ENCODE measurements at regions of chr12 and their contacts with region 1.

Region 1: DNA sequence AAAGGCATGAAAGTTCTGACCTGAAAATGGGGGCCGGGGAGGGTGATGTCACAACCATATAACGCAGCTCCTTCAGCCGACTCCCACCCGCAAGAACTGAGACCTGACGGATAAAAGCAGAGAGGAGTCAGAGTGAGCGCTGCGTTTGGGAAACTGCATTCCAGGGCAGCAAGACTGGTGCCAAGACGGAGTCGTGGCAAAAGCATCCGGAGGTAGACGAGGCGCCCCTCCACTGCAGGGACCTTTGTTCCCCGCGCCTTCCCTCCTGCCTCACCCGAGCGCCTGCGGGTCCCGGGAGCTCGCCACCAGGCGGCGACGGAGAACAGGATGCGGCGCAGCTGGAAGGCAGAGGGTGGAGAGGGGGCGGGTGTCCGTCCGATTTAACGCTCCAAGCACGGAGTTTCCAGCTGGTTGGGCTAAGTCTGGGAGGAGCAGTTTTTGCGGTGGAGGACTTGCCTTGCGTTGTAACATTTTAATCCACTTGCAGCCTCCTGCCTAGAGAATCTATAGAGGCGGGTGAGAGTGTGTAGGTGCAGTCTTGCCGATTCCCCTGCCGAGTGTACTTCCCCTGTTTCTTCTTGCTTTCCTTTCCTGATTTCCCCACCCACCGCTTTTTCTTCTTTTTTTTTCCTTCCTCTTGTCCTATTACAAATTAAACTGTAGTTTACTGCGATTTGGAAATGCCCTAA is 1.2 kb upstream of the CPNE8 start:
- DNase-seq: peak; percentile 25 to 83 (median 49)
- ATAC-seq: peak; percentile 77
- H3K4me3 ChIP-seq: peak overlapping the region; percentile 76
- H3K4me3 Mint-ChIP-seq: peak overlapping the region; percentile 86 to 97 (median 92)
- H3K27ac ChIP-seq: no peak overlapping the region
- H3K27ac Mint-ChIP-seq: peak overlapping the region in 6 of 9 donors; percentile 38 to 95 (median 56)
- H3K4me1 ChIP-seq: no peaks in the 10 kb centered on the region
- H3K4me1 Mint-ChIP-seq: peaks cover 17 to 36% (median 25%) of the 10 kb centered on the region in 7 donors
- H3K27me3 ChIP-seq: no peaks in the 10 kb centered on the region
- H3K27me3 Mint-ChIP-seq: peaks cover 6 to 27% (median 21%) of the 10 kb centered on the region in 5 donors

Region 2: DNA sequence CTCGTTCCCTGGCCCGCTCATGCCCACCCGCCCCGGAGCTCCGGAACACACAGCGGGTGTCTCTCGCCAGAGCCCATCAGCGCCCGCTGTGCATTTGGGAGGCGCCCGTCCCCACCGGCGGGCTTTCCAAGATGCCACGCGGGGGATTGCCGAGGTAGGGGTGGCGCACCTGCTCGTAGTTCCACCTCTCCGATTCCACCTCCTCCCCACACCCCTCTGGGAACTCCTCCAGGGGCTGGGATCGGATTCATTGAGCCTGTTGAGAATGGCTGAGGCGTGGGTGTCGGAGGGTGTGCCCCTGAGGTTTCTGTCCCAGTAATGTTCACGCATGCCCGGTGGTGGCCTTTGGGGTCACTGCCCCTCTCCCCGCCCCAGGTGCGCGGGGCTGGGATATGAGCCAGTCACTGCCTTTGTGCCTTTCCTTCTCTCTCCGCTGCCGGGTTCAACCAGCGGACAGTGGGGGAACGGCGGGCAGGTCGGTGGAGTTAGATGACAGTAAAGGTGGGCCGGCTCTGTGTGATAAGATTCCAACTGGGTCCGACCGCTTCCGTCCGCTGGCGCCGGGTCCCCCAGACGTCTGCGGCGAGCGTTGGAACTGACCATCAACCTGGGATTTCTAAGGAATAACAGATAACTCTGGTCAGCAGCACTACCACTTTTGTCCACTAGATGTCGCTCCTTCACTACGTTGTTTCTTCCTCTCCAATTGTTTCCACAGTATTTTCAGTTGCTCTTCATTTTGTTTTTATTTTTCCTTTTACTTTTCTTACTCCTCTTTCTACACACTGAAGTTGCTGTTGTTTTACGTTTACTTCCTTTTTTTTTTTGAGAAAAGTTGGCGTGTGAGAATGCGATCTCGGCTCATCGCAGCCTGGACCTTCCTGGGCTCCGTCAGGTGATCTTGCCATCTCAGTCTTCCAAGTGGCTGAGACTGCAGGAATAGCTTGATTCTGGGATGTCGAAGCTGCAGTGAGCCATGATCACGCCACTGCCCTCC is 768.1 kb before region 1 on chr12:
- CTCF ChIA-PET with region 1: no interaction called
- POLR2A ChIA-PET with region 1: no interaction called
- intact Hi-C with region 1: loop called (anchors 10 kb)
- DNase-seq: peak in 8 of 9 donors; percentile 26 to 65 (median 54)
- ATAC-seq: peak; percentile 74
- H3K4me3 ChIP-seq: peak overlapping the region; percentile 31
- H3K4me3 Mint-ChIP-seq: peak overlapping the region; percentile 45 to 89 (median 80)
- H3K27ac ChIP-seq: no peak overlapping the region
- H3K27ac Mint-ChIP-seq: peak overlapping the region in 4 of 9 donors; percentile 33 to 71 (median 53)
- H3K4me1 ChIP-seq: peaks cover 0 to 3% of the 10 kb centered on the region in 2 donors
- H3K4me1 Mint-ChIP-seq: peaks cover 0 to 13% (median 9%) of the 10 kb centered on the region in 7 donors
- H3K27me3 ChIP-seq: no peaks in the 10 kb centered on the region
- H3K27me3 Mint-ChIP-seq: peaks cover 0 to 29% (median 18%) of the 10 kb centered on the region in 5 donors

Region 3: DNA sequence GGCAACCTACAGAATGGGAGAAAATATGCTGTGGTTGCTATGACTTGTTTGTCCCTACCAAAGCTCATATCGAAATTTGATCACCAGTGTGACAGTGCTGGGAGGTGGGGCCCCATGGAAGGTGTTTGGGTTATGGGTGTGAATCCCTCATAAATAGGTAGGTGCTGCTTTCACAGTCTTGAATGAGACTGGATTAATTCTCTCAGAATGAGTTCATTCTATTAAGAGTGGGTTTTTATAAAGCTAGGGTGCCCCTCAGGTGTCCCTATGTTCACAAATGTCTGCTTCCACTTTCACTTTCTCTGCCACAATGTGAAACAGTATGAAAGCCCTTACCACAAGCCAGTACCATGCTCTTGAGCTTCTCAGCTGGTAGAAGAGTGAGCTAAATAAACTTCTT is 134.8 kb before region 1 on chr12:
- CTCF ChIA-PET with region 1: no interaction called
- POLR2A ChIA-PET with region 1: no interaction called
- intact Hi-C with region 1: loop called in 1 of 2 experiments (anchors 5 kb)
- DNase-seq: peak in 5 of 9 donors; percentile 10 to 30 (median 15)
- ATAC-seq: peak; percentile 67
- H3K4me3 ChIP-seq: peak overlapping the region; percentile 37
- H3K4me3 Mint-ChIP-seq: peak overlapping the region in 9 of 10 donors; percentile 29 to 74 (median 67)
- H3K27ac ChIP-seq: peak overlapping the region; percentile 40
- H3K27ac Mint-ChIP-seq: peak overlapping the region; percentile 11 to 85 (median 41)
- H3K4me1 ChIP-seq: no peaks in the 10 kb centered on the region
- H3K4me1 Mint-ChIP-seq: peaks cover 0 to 13% (median 11%) of the 10 kb centered on the region in 7 donors
- H3K27me3 ChIP-seq: no peaks in the 10 kb centered on the region
- H3K27me3 Mint-ChIP-seq: no peaks in the 10 kb centered on the region